Activated T-helper 2 cell treated with anti-CD3 and anti-CD28 coated beads, Interferon-gamma antibody, Interleukin-2, Interleukin-4, amounts not matched to agents 10 μg/mL and 5 μg/mL and 100 μg/mL, durations not matched to agents 14 hours and 24 hours and 36 hours (primary cell): ENCODE measurements at regions of chr14 and their contacts with region 1.

Region 1: DNA sequence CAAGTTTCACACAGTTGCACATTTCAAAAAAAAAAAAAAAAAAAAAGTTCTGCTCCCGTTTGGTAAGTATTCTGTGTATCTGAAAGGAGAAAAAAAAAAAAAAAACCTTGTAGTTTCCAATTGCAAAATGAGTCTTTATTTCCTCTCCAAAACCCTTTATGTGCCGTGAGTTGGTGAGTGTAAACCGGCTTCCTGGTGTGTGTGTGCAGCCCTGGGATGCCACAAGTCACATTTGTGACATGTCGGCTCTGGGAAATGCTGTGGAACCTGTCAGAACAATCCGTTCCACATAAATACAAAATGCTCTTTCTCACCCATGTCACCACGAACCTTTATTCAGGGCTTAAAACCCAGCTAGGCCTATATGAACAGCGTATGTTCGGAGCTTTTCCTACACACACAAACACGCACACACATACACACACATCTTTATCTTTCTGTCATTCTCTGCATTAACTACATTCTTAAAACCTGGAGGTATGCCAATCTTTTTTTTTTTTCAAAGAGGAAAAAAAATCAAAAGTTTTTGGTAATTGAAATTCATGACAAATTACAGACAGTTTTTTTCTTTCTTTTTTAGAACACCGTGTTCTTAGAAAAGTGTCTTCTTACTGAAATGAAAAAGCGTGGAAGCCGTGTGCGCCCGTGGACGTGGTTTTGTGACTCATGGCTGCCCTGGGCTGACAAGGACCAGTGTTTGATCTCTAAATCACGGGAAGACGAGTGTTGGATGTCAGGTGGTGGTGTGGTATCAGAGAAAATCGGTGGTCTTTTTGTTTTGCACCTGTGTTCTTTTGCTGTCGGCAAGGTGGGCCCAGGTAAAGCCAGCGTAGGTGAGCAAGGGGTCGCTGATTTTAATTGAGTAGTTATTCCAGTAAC is 612.0 kb downstream of the VRK1 start:
- DNase-seq: peak; percentile 56
- H3K4me3 Mint-ChIP-seq: peak overlapping the region; percentile 64
- H3K27ac Mint-ChIP-seq: peak overlapping the region; percentile 92
- H3K4me1 Mint-ChIP-seq: peaks cover 32% of the 10 kb centered on the region
- H3K27me3 Mint-ChIP-seq: no peaks in the 10 kb centered on the region

Region 2: DNA sequence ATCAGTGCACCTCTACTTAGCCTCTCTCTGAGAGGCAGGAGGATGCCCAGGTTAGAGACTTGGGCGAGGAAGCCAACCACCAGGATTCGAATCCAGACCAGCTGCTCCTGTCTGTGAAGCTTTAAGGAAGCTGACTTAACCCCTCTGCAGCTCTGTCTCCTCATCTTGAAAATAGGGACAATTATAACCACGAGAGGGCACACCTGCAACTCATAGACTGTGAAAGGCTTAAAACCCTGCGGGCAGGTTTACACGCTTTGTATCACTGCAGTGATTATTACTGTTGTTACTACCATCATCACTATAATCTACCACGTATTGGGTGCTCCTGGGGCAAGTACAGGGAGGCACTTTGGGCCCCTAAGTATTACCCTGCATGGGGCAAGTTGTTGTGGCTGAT is 232.2 kb before region 1 on chr14:
- intact Hi-C with region 1: loop called (anchors 10 kb)
- DNase-seq: peak; percentile 19
- H3K4me3 Mint-ChIP-seq: no peak overlapping the region
- H3K27ac Mint-ChIP-seq: no peak overlapping the region
- H3K4me1 Mint-ChIP-seq: peaks cover 35% of the 10 kb centered on the region
- H3K27me3 Mint-ChIP-seq: no peaks in the 10 kb centered on the region

Region 3: DNA sequence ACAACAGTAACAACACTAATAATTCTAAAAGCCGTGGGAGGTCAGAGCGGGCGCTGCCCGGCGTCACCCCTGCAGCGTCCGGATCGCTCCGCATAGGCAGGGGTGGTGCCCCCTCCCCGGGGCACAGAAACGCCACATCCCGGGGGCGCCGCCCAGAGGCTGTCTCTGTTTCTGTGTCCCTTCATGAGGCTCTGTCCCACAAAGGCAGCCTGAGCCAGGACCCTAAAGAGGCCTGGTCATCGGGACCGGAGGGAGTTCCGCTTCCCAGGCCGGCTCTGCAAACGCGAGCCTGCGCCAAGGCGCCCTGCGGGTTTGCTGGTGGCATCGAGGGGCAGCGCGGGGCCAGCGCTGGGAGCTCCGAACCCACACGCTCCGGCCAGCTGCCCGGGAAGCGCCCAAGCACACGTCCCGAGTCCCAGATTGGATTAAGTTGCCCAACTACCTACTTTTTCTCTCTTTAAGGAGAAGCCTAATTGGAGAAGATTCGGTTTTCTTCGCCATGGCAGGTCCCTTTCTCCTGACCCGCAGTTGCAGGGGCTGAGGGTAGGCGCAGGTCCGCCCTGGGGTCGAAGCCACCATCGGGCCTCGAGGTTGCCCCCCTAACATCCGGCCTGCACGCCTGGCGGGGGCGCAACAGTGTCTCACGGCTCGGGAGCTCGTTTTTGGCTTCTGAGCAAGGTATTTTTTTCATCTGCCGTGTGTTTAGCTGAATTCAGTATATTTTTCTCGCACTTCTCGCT is 190.3 kb before region 1 on chr14:
- intact Hi-C with region 1: loop called (anchors 10 kb)
- DNase-seq: peak; percentile 10
- H3K4me3 Mint-ChIP-seq: peak overlapping the region; percentile 85
- H3K27ac Mint-ChIP-seq: no peak overlapping the region
- H3K4me1 Mint-ChIP-seq: peaks cover 13% of the 10 kb centered on the region
- H3K27me3 Mint-ChIP-seq: peaks cover 43% of the 10 kb centered on the region

Region 4: GRCh38 chr14:97290977-97291376 is 118.2 kb before region 1 on chr14:
- intact Hi-C with region 1: loop called (anchors 5 kb)
- DNase-seq: no peak
- H3K4me3 Mint-ChIP-seq: no peak overlapping the region
- H3K27ac Mint-ChIP-seq: no peak overlapping the region
- H3K4me1 Mint-ChIP-seq: peaks cover 16% of the 10 kb centered on the region
- H3K27me3 Mint-ChIP-seq: peaks cover 36% of the 10 kb centered on the region

Region 5: GRCh38 chr14:97306760-97307246 is 102.4 kb before region 1 on chr14:
- intact Hi-C with region 1: loop called (anchors 2 kb)
- DNase-seq: no peak
- H3K4me3 Mint-ChIP-seq: no peak overlapping the region
- H3K27ac Mint-ChIP-seq: peak overlapping the region; percentile 84
- H3K4me1 Mint-ChIP-seq: peaks cover 53% of the 10 kb centered on the region
- H3K27me3 Mint-ChIP-seq: no peaks in the 10 kb centered on the region

Region 6: DNA sequence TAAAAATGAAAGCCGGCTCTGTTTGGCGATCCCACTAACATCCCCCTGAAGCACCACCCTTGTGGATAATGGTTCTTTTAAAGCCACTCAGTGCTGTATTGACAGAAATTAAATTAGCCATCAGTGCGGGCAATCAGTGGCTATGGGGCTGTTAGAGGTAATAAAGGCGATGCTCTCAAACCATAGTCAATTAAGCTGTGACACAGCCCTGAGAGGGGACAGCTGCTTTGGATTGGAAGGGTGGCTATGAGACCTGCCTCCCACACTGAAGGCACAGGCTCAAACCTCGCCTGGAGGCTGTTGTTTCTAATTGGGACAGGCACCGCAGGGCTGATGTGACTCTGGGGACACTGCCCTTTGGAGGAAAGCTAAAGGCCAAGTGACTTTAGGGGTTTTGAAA is 49.8 kb before region 1 on chr14:
- intact Hi-C with region 1: no loop called
- DNase-seq: no peak
- H3K4me3 Mint-ChIP-seq: no peak overlapping the region
- H3K27ac Mint-ChIP-seq: no peak overlapping the region
- H3K4me1 Mint-ChIP-seq: peaks cover 9% of the 10 kb centered on the region
- H3K27me3 Mint-ChIP-seq: no peaks in the 10 kb centered on the region

Region 7: GRCh38 chr14:97380539-97380941 is 28.6 kb before region 1 on chr14:
- intact Hi-C with region 1: loop called (anchors 1 kb)
- DNase-seq: peak; percentile 38
- H3K4me3 Mint-ChIP-seq: no peak overlapping the region
- H3K27ac Mint-ChIP-seq: peak overlapping the region; percentile 76
- H3K4me1 Mint-ChIP-seq: peaks cover 65% of the 10 kb centered on the region
- H3K27me3 Mint-ChIP-seq: no peaks in the 10 kb centered on the region

Region 8: GRCh38 chr14:97442363-97442762 is 33.2 kb after region 1 on chr14:
- intact Hi-C with region 1: loop called (anchors 1 kb)
- DNase-seq: peak; percentile 70
- H3K4me3 Mint-ChIP-seq: peak overlapping the region; percentile 65
- H3K27ac Mint-ChIP-seq: peak overlapping the region; percentile 98
- H3K4me1 Mint-ChIP-seq: peaks cover 79% of the 10 kb centered on the region
- H3K27me3 Mint-ChIP-seq: no peaks in the 10 kb centered on the region